ENCODE measurements at regions of chr13 and their contacts with region 1.

Region 1: GRCh38 chr13:29210676-29211075 is 384.8 kb downstream of the SLC7A1 start:
- DNase-seq: no peak

Region 2: GRCh38 chr13:29354377-29354776 is 143.7 kb after region 1 on chr13:
- in situ Hi-C with region 1: loop called (anchors 5 kb)
- DNase-seq: no peak